HEK293 (cell line): ENCODE measurements at regions of chr2 and their contacts with region 1.

Region 1: GRCh38 chr2:217650716-217651360 is 352.0 kb downstream of the TNS1 start:
- H3K4me3 ChIP-seq: no peak overlapping the region
- H3K27ac ChIP-seq: no peak overlapping the region
- H3K4me1 ChIP-seq: no peaks in the 10 kb centered on the region
- CTCF ChIP-seq: peak; percentile 56; the same call in 1 of the 2 replicates

Region 2: DNA sequence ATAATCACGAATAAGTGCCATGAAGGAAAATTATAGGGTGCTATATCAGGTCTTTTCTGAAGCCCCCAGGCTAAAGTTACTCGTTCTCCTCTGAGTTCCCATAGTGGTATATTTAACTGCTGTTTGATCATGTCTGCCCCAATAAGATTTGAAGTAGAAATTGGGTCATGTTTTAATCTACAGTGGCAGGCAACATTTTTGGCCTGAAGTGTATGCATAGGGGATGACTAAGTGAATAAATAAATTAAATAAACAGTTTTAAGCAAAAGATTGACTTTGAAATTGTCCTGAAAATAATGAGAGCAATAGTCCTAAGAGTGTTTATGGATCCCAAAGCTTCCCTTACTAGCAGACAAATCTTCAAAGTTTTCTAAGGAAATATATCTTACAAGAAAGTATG is 149.0 kb before region 1 on chr2:
- CTCF ChIA-PET with region 1: no interaction called
- POLR2A ChIA-PET with region 1: no interaction called
- H3K4me3 ChIP-seq: no peak overlapping the region
- H3K27ac ChIP-seq: no peak overlapping the region
- H3K4me1 ChIP-seq: no peaks in the 10 kb centered on the region
- CTCF ChIP-seq: no peak

Region 3: DNA sequence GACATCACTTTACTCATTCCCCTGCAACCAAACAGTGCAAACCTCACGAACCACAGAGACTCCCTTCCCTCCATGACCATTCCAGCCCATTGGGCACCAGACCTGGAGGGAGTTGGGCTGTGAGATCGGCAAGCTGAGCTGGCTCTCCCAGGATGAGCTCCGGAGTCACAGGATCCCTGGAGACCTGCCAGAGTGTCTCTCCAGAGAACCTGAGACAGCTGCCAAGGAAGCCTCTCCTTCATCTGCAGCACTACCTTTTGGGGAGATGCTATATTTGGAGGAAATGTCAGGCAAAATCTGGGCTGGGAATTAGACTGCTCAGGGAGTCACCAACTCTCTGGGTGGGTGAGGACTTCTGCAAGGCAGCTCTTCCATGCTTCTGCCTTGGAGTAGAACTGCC is 65.5 kb before region 1 on chr2:
- CTCF ChIA-PET with region 1: interaction called, 10 read pairs
- POLR2A ChIA-PET with region 1: no interaction called
- H3K4me3 ChIP-seq: no peak overlapping the region
- H3K27ac ChIP-seq: no peak overlapping the region
- H3K4me1 ChIP-seq: no peaks in the 10 kb centered on the region
- CTCF ChIP-seq: no peak

Region 4: GRCh38 chr2:217666338-217666737 is 15.5 kb after region 1 on chr2:
- CTCF ChIA-PET with region 1: interaction called, 43 read pairs
- POLR2A ChIA-PET with region 1: interaction called, 4 read pairs
- H3K4me3 ChIP-seq: no peak overlapping the region
- H3K27ac ChIP-seq: no peak overlapping the region
- H3K4me1 ChIP-seq: no peaks in the 10 kb centered on the region
- CTCF ChIP-seq: no peak

Region 5: DNA sequence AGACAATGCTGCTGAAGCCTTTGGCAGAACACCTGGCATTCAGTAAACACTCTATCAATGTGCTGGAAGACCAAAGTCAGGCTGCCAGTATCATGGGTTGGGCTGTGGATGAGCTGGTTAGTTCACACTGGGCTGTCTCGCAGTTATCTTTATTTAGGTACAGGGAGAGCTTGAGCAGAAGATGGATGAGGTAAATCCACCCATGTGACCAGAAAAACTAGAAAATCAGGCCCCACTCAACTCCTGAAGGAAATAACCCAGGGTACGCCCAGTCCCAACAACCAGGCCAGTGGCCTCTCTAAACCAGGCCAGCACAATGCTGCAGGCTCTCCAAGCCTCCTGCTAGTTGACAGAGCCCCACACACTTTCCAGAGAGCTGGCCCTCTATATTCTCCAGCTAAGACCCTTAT is 21.7 kb after region 1 on chr2:
- CTCF ChIA-PET with region 1: interaction called, 43 read pairs
- POLR2A ChIA-PET with region 1: no interaction called
- H3K4me3 ChIP-seq: no peak overlapping the region
- H3K27ac ChIP-seq: no peak overlapping the region
- H3K4me1 ChIP-seq: no peaks in the 10 kb centered on the region
- CTCF ChIP-seq: no peak

Region 6: GRCh38 chr2:217713395-217714286 is 62.8 kb after region 1 on chr2:
- CTCF ChIA-PET with region 1: interaction called, 59 read pairs
- POLR2A ChIA-PET with region 1: no interaction called
- H3K4me3 ChIP-seq: no peak overlapping the region
- H3K27ac ChIP-seq: no peak overlapping the region
- H3K4me1 ChIP-seq: no peaks in the 10 kb centered on the region
- CTCF ChIP-seq: peak; percentile 88